ENCODE measurements at regions of chr11 and their contacts with region 1.

Region 1: DNA sequence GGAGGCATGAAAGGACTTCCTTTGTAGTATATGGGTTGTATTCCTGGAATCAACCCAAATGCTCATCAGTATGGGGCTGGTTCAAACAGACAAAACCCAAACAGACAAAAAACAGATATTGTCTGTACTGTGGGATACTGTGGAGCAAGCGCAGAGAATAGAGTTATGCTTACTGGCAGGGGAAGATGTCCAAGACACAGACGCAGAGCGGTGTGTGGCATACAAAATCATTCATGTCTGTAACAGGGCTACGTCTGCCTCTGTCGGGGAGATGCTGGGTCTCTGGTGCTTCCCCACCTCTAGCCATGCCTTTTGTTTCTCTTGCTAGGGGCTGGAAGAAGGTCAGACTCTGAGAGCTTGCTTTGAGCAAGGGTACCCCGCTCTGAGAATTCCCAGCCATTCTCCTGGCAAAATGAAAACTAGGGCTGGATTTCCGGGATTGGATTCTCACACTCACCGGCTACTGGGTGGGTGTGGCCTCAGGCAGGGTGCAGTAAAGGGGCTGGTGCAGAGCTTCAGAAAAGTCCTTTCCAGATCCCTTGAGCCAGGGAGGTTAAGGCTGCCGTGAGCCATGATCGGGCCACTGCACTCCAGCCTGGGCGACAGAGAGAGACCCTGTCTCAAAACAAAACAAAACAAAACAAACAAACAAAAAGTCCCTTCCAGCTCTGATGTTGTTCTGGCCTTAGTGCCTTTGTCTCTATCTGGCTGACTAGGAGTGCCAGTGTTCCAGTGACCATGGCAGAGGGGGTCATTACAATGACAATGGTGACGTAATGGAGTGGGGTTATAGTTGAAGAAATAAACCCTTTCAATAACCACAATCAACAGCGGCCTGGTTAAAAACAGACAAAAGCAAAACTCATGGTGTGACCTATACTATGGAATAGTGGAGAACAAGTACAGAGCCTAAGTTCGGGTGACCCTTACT is 2.9 kb upstream of the ABCC8 start:
- DNase-seq: no peak
- H3K4me3 ChIP-seq: no peak overlapping the region
- H3K27ac ChIP-seq: no peak overlapping the region
- H3K4me1 ChIP-seq: peaks cover 0 to 22% (median 14%) of the 10 kb centered on the region in 4 donors
- H3K27me3 ChIP-seq: peaks cover 0 to 53% (median 12%) of the 10 kb centered on the region in 4 donors
- CTCF ChIP-seq: no peak
- EP300 ChIP-seq: no peak
- POLR2A ChIP-seq: no peak

Region 2: GRCh38 chr11:17384002-17384511 is 95.5 kb before region 1 on chr11:
- intact Hi-C with region 1: no loop called
- DNase-seq: no peak
- H3K4me3 ChIP-seq: no peak overlapping the region
- H3K27ac ChIP-seq: no peak overlapping the region
- H3K4me1 ChIP-seq: peaks cover 6 to 21% (median 17%) of the 10 kb centered on the region in 4 donors
- H3K27me3 ChIP-seq: peaks cover 0 to 8% (median 0%) of the 10 kb centered on the region in 4 donors
- CTCF ChIP-seq: peak; percentile 83 to 93 (median 86)
- EP300 ChIP-seq: no peak
- POLR2A ChIP-seq: no peak

Region 3: DNA sequence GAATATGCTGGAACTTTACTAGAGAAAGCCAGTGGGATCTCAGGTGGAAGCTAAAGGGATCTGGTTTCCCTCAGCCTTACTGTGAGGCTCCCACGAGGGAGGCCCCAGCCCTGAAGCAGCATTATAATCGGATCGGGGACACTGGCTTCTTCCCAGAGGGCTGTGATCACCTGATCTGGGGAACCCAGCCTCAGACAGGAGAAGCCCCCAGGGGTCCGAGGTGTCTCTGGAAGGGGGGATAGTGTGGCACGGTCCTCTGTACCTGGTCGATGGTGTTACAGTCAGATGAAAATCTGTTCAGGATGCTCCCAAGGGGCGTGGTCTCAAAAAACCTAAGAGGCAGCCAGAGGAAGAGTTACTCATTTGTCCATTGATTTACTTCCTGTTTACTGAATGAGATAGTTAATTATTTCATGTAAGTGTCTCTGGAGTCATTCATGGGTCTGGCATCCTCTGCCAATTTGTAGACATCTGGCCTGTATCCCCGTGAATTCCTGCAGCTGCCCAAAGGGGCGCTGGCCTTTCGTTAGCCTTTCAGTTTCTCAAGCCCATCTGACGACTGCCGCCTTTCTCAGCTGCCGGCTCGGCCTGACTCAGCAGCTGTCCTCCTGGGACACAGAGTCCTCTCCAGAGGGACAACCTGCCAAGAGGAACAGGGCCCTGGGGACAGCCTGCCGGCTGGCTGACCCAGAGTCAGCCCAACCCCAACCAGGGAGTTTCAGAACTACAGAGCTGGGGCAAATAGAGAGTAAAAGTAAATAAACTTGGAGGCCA is 74.1 kb before region 1 on chr11:
- intact Hi-C with region 1: loop called (anchors 5 kb)
- DNase-seq: no peak
- H3K4me3 ChIP-seq: no peak overlapping the region
- H3K27ac ChIP-seq: peak overlapping the region; percentile 23 to 38 (median 32)
- H3K4me1 ChIP-seq: peaks cover 17 to 24% (median 19%) of the 10 kb centered on the region in 4 donors
- H3K27me3 ChIP-seq: no peaks in the 10 kb centered on the region
- CTCF ChIP-seq: peak in 1 of 3 experiments; percentile 35
- EP300 ChIP-seq: no peak
- POLR2A ChIP-seq: no peak